Kidney (tissue), 22 donors: ENCODE measurements at regions of chr1 and their contacts with region 1.

Region 1: DNA sequence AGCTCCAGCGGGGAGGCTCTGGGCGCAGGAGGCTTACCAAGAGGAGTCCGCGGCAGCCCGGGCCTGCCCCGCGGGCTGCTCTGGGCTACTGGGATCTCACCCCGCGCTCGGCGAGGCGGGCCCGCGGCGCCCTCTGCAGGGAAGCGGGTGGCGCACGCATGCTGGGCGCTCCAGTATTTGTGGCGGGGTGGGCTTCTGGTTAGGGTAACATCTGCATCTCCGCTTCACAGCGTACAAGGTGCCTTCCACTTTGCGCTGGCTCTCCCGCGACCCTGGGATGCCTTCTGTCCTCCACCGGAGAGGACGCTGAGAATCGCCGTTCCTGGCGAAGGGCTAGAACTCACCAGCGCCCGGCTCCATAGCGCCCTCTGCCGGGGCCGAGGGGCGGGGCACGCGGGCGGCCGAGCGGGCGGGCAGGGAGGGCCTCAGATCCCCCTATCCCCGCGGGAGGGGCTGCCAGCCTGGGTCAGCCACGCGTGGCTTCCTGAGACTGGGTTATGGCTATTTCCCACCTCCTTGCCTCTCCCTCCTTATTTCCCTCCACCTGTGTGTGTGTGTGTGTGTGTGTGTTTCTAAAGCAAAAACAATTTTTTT is 46.6 kb upstream of the CTBS start:
- DNase-seq: peak; percentile 92 to 94 (median 93)
- H3K4me3 ChIP-seq: peak overlapping the region; percentile 75 to 88 (median 87)
- H3K27ac ChIP-seq: peak overlapping the region; percentile 3 to 32
- H3K4me1 ChIP-seq: no peaks in the 10 kb centered on the region
- H3K27me3 ChIP-seq: no peaks in the 10 kb centered on the region
- CTCF ChIP-seq: peak; percentile 85

Region 2: DNA sequence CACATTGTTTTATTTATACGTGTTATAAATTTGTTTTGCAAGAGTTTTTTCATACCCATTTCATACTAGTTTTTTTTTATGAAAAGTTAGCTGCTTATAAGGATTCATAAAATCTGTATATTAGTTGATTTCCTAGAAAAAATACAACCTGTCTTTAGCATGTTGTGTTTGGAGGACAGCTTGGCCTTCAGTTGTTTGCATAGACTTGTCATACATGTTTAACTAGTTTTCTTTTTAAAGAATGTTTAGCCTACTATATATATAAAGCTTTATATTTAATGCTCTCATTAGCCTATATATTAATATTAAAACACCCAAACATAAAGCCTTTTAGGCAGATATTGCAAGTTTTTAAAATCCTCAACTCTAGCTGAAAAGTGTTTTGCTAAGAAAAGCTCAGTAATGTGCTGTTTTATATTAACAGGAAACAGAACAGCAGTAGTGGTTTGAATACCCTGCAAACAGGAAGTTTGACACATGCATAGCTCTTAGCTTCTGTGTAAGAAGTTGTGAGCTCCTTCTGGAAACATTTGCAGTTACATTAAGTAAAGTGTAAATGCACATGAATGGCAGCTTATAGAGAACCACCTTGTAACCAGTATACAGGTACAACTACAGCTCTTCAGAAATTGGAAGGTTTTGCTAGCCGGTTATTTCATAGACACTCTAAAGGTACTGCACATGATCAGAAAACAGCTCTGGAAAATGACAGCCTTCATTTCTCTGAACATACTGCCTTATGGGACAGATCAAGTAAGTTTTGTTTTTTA is 476.8 kb before region 1 on chr1 and contains the start of gene PRKACB:
- intact Hi-C with region 1: loop called (anchors 10 kb)
- DNase-seq: peak in 1 of 5 donors; percentile 56
- H3K4me3 ChIP-seq: peak within 1 kb of the TSS in 2 of 3 donors; percentile 56 to 58
- H3K27ac ChIP-seq: peak within 1 kb of the TSS; percentile 5 to 11
- H3K4me1 ChIP-seq: no peaks in the 10 kb centered on the region
- H3K27me3 ChIP-seq: no peaks in the 10 kb centered on the region
- CTCF ChIP-seq: no peak
- total RNA-seq, gene PRKACB: 52.5 TPM